BJ (cell line): ENCODE measurements at regions of chr2 and their contacts with region 1.

Region 1: GRCh38 chr2:44392338-44392943 is 30.7 kb downstream of the CAMKMT start:
- DNase-seq: no peak
- H3K4me3 ChIP-seq: no peak overlapping the region
- H3K27me3 ChIP-seq: no peaks in the 10 kb centered on the region
- CTCF ChIP-seq: peak; percentile 56

Region 2: DNA sequence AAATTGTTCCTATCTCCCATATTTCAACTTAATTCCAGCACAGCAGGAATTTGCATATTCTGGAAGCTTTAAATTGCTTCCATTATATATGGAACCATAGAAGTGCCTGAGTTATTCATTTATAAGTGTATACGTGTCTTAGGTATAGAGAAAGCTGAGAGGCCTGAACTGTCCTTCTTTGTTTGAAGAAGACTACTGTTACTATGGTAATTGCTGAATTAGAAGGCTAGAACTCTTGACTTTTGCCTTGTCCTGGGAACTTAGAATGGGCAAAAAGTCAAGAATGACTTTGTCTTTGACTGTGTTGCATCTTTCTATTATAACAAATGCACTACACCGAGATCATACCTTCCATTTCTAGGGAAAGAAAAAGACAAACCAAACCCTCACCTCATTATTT is 15.0 kb before region 1 on chr2:
- CTCF ChIA-PET with region 1: interaction called, 13 read pairs
- POLR2A ChIA-PET with region 1: no interaction called
- DNase-seq: no peak
- H3K4me3 ChIP-seq: no peak overlapping the region
- H3K27me3 ChIP-seq: no peaks in the 10 kb centered on the region
- CTCF ChIP-seq: no peak

Region 3: GRCh38 chr2:44955593-44956392 is 563.4 kb after region 1 on chr2:
- CTCF ChIA-PET with region 1: interaction called, 94 read pairs
- POLR2A ChIA-PET with region 1: no interaction called
- DNase-seq: no peak
- H3K4me3 ChIP-seq: no peak overlapping the region; the same call in 1 of the 2 replicates
- H3K27me3 ChIP-seq: peaks cover 41% of the 10 kb centered on the region
- CTCF ChIP-seq: peak; percentile 92